ENCODE measurements at regions of chrX and their contacts with region 1.

Region 1: DNA sequence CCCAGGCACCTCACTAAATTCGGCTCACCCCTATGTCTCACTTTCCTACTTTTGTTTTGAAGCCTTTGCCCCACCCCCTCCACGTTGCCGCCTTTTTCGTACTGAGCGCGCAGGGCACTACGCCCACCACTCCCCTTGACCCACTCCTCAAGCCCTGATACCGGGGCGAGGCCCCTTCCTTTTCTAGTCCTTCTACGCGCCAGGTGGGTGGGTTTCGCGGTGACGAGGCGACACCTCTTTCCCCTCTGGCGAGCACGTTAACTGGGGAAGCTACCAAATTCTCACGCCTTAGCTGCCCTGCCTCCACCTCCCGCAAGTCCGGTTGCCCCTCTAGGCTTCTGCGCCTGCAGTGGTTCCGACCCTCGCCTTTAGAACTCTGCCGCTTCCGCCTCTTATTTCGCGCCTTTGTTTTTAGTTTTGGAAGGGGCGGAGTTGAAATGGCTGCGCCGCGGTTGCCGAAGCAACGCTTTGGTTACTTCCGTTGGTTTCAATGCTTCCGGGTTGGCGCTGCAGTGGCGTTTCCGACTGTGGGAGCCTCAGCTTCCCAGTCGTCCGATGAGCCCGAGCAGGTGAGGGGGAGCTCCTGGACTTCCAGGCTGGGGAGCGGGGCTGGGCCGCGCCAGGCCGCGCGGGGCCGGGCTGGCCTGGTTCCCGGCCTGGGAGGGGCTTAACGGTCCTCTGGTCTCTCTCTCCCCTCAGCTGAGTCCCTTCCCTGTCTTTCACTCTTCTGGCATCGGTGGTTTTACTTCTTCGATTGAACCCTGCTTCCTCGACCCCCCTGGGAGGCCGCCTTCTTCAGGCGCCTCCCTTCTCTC is at the start of gene SLC25A14:
- DNase-seq: peak; percentile 60 to 65
- ATAC-seq: peak; percentile 85 to 97 (median 91)
- H3K4me3 ChIP-seq: peak within 1 kb of the TSS; percentile 33 to 81 (median 69)
- H3K27ac ChIP-seq: peak within 1 kb of the TSS in 6 of 10 donors; percentile 54 to 75 (median 64)
- H3K4me1 ChIP-seq: peaks cover 0 to 8% (median 0%) of the 10 kb centered on the region in 9 donors
- H3K27me3 ChIP-seq: no peaks in the 10 kb centered on the region
- CTCF ChIP-seq: no peak
- total RNA-seq, gene SLC25A14: 4.1 to 8.0 (median 6.5) TPM

Region 2: DNA sequence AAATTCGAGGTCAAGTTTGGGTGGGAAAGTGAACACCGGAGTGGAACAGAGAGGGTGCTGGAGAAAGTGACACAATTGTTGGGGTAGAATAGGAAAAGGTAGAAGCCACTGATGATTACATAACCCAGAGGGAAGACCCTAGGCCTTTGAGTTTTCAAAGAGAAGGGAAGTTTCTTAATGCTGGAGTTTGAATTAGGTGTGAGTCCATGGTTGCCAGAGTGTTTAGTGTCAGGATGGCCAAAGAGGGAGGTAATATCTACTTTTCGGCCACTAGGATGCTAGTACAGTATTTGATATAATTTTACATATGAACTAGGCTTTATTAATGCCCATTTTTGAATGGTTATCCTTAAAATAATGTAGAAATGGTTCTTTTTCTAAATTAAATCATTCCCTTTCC is 351.7 kb before region 1 on chrX:
- intact Hi-C with region 1: no loop called
- DNase-seq: no peak
- ATAC-seq: no peak
- H3K4me3 ChIP-seq: no peak overlapping the region
- H3K27ac ChIP-seq: no peak overlapping the region
- H3K4me1 ChIP-seq: peaks cover 0 to 8% (median 0%) of the 10 kb centered on the region in 9 donors
- H3K27me3 ChIP-seq: no peaks in the 10 kb centered on the region
- CTCF ChIP-seq: no peak

Region 3: GRCh38 chrX:130676861-130677260 is 337.2 kb after region 1 on chrX:
- intact Hi-C with region 1: no loop called
- DNase-seq: no peak
- ATAC-seq: no peak
- H3K4me3 ChIP-seq: no peak overlapping the region
- H3K27ac ChIP-seq: no peak overlapping the region
- H3K4me1 ChIP-seq: peaks cover 0 to 12% (median 0%) of the 10 kb centered on the region in 9 donors
- H3K27me3 ChIP-seq: no peaks in the 10 kb centered on the region
- CTCF ChIP-seq: no peak

Region 4: GRCh38 chrX:130909469-130910136 is 570.0 kb after region 1 on chrX:
- intact Hi-C with region 1: loop called in 3 of 10 experiments (anchors 5 to 10 kb)
- DNase-seq: no peak
- ATAC-seq: no peak
- H3K4me3 ChIP-seq: no peak overlapping the region
- H3K27ac ChIP-seq: no peak overlapping the region
- H3K4me1 ChIP-seq: no peaks in the 10 kb centered on the region
- H3K27me3 ChIP-seq: peaks cover 0 to 19% (median 0%) of the 10 kb centered on the region in 7 donors
- CTCF ChIP-seq: no peak

Measured in heart right ventricle (tissue), 16 donors.